IMR-90 (cell line): ENCODE measurements at regions of chr1 and their contacts with region 1.

Region 1: GRCh38 chr1:87093286-87093685 is 178.9 kb downstream of the HS2ST1 start:
- DNase-seq: peak; percentile 36
- ATAC-seq: 0 out of 2 replicates have a peak, but pooled peaks have one; percentile 40
- H3K4me3 ChIP-seq: no peak overlapping the region
- H3K27ac ChIP-seq: no peak overlapping the region
- H3K4me1 ChIP-seq: no peaks in the 10 kb centered on the region
- H3K27me3 ChIP-seq: no peaks in the 10 kb centered on the region
- CTCF ChIP-seq: no peak
- POLR2A ChIP-seq: no peak
- RAD21 ChIP-seq: no peak

Region 2: GRCh38 chr1:86714561-86715244 is 378.6 kb before region 1 on chr1:
- CTCF ChIA-PET with region 1: no interaction called
- POLR2A ChIA-PET with region 1: interaction called, 13 read pairs
- dilution Hi-C with region 1: no loop called
- in situ Hi-C with region 1: no loop called
- intact Hi-C with region 1: no loop called
- DNase-seq: no peak
- ATAC-seq: peak; percentile 9; the same call in 1 of the 2 replicates
- H3K4me3 ChIP-seq: no peak overlapping the region
- H3K27ac ChIP-seq: no peak overlapping the region
- H3K4me1 ChIP-seq: peaks cover 8% of the 10 kb centered on the region
- H3K27me3 ChIP-seq: no peaks in the 10 kb centered on the region
- CTCF ChIP-seq: no peak
- POLR2A ChIP-seq: no peak
- RAD21 ChIP-seq: no peak

Region 3: GRCh38 chr1:87927391-87928280 is 834.4 kb after region 1 on chr1:
- CTCF ChIA-PET with region 1: no interaction called
- POLR2A ChIA-PET with region 1: no interaction called
- dilution Hi-C with region 1: no loop called
- in situ Hi-C with region 1: no loop called
- intact Hi-C with region 1: no loop called
- DNase-seq: no peak
- ATAC-seq: no peak
- H3K4me3 ChIP-seq: no peak overlapping the region
- H3K27ac ChIP-seq: no peak overlapping the region
- H3K4me1 ChIP-seq: no peaks in the 10 kb centered on the region
- H3K27me3 ChIP-seq: no peaks in the 10 kb centered on the region
- CTCF ChIP-seq: no peak
- POLR2A ChIP-seq: no peak
- RAD21 ChIP-seq: no peak